Natural killer cell (primary cell): ENCODE measurements at regions of chr7 and their contacts with region 1.

Region 1: DNA sequence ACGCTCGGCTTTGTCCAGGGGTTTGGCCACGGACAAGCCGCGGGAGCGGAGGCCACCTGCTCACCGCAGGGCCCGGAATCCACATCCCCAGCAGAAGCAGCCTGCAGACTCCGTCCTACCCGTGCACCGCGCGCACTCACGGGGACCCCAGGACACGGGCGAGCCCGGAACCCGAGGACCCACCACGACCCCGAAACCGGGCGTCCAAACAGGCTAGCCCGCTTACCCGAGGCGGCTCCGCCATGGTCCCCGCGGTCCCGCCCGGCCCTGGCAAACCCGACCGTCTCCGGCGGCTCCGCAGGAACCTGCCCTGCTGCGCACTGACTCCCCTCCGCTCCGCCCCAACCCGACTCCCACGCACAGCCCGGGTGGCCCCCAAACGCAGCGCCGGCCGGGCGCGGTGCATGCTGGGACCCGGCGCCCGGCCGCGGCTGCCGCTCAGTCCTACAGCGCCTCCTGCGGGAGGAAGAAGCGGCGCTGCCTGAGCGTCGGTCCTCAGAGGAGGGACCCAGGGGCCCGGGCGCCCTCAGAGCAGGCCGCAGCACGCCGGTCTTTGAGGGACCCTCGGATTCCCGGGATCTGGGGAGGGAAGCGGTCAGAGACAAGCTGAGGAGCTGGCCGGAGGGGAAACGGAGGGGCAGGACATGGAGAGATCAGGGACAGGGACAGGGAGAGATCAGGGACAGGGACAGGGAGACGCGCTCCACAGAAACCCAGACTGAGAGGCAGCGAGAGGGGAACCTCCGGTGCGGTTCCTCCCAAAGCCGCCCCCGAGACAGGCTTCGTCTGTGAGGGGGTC is at the start of gene ZNF786:
- DNase-seq: peak; percentile 88 to 97
- ATAC-seq: peak; percentile 83 to 96 (median 85)
- H3K4me3 ChIP-seq: peak within 1 kb of the TSS; percentile 98
- H3K4me3 Mint-ChIP-seq: peak within 1 kb of the TSS; percentile 99
- H3K27ac ChIP-seq: peak within 1 kb of the TSS; percentile 81
- H3K27ac Mint-ChIP-seq: peak within 1 kb of the TSS; percentile 95 to 97
- H3K4me1 ChIP-seq: peaks cover 37% of the 10 kb centered on the region
- H3K4me1 Mint-ChIP-seq: peaks cover 39 to 47% of the 10 kb centered on the region in 2 donors
- H3K27me3 ChIP-seq: no peaks in the 10 kb centered on the region
- H3K27me3 Mint-ChIP-seq: no peaks in the 10 kb centered on the region
- CTCF ChIP-seq: peak; percentile 90
- total RNA-seq, gene ZNF786: 3.2 to 9.1 (median 4.6) TPM

Region 2: DNA sequence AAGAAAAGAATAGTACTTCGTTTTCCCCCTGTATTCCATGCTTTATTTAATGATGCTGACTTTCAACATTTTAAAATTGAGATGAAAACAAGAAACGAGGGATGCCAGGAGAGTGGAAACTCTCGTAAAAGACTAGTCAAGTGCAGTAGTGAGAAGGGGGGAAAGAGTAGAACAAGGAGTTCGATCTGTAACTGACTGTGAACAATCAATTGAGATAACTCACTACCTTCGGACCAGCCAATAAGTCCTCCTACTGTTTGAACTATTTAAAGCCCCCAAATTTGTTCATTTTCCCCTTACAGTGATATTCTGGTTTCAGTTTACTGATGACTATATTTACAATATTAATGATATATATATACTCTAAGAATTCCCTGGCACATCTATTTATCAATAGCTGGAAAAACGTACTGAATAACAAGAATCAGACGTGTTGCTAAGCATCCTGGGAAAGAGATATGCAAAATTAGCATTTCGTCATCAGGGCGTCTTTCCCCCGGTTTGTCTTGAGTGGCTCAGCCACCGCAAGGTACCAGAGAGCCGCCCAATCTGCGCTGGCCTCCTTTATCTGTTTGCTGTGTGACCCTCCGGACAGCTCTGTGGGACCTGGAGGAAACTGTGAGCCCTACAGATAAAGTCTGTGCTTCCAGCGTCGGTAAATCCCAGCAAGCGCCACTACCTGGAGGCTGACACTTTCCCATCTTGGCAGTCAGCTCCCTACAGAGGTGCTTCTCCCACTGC is 103.4 kb before region 1 on chr7:
- intact Hi-C with region 1: loop called (anchors 1 kb)
- DNase-seq: peak; percentile 72 to 94
- ATAC-seq: peak; percentile 85 to 92 (median 87)
- H3K4me3 ChIP-seq: peak overlapping the region; percentile 68
- H3K4me3 Mint-ChIP-seq: peak overlapping the region; percentile 99
- H3K27ac ChIP-seq: peak overlapping the region; percentile 88
- H3K27ac Mint-ChIP-seq: peak overlapping the region; percentile 92 to 96
- H3K4me1 ChIP-seq: peaks cover 35% of the 10 kb centered on the region
- H3K4me1 Mint-ChIP-seq: peaks cover 45 to 55% of the 10 kb centered on the region in 2 donors
- H3K27me3 ChIP-seq: no peaks in the 10 kb centered on the region
- H3K27me3 Mint-ChIP-seq: no peaks in the 10 kb centered on the region
- CTCF ChIP-seq: no peak

Region 3: GRCh38 chr7:149028346-149029109 is 62.1 kb before region 1 on chr7 and contains the start of gene PDIA4:
- intact Hi-C with region 1: loop called (anchors 2 kb)
- DNase-seq: peak; percentile 96 to 98
- ATAC-seq: peak; percentile 82 to 94 (median 87)
- H3K4me3 ChIP-seq: peak within 1 kb of the TSS; percentile 64
- H3K4me3 Mint-ChIP-seq: peak within 1 kb of the TSS; percentile 93
- H3K27ac ChIP-seq: peak within 1 kb of the TSS; percentile 60
- H3K27ac Mint-ChIP-seq: peak within 1 kb of the TSS; percentile 89 to 94
- H3K4me1 ChIP-seq: peaks cover 18% of the 10 kb centered on the region
- H3K4me1 Mint-ChIP-seq: peaks cover 36 to 42% of the 10 kb centered on the region in 2 donors
- H3K27me3 ChIP-seq: no peaks in the 10 kb centered on the region
- H3K27me3 Mint-ChIP-seq: peaks cover 0 to 3% of the 10 kb centered on the region in 2 donors
- CTCF ChIP-seq: no peak
- total RNA-seq, gene PDIA4: 54.0 to 82.0 (median 62.7) TPM

Region 4: GRCh38 chr7:149125863-149126661 is 35.5 kb after region 1 on chr7 and contains the start of gene ZNF425:
- intact Hi-C with region 1: loop called (anchors 1 kb)
- DNase-seq: peak; percentile 94 to 96
- ATAC-seq: peak; percentile 87 to 99 (median 91)
- H3K4me3 ChIP-seq: peak within 1 kb of the TSS; percentile 100
- H3K4me3 Mint-ChIP-seq: peak within 1 kb of the TSS; percentile 100
- H3K27ac ChIP-seq: peak within 1 kb of the TSS; percentile 88
- H3K27ac Mint-ChIP-seq: peak within 1 kb of the TSS; percentile 89 to 98
- H3K4me1 ChIP-seq: peaks cover 17% of the 10 kb centered on the region
- H3K4me1 Mint-ChIP-seq: peaks cover 25 to 36% of the 10 kb centered on the region in 2 donors
- H3K27me3 ChIP-seq: no peaks in the 10 kb centered on the region
- H3K27me3 Mint-ChIP-seq: no peaks in the 10 kb centered on the region
- CTCF ChIP-seq: peak; percentile 89
- total RNA-seq, gene ZNF425: 1.2 to 1.7 (median 1.4) TPM